ENCODE measurements at regions of chr1 and their contacts with region 1.

Region 1: DNA sequence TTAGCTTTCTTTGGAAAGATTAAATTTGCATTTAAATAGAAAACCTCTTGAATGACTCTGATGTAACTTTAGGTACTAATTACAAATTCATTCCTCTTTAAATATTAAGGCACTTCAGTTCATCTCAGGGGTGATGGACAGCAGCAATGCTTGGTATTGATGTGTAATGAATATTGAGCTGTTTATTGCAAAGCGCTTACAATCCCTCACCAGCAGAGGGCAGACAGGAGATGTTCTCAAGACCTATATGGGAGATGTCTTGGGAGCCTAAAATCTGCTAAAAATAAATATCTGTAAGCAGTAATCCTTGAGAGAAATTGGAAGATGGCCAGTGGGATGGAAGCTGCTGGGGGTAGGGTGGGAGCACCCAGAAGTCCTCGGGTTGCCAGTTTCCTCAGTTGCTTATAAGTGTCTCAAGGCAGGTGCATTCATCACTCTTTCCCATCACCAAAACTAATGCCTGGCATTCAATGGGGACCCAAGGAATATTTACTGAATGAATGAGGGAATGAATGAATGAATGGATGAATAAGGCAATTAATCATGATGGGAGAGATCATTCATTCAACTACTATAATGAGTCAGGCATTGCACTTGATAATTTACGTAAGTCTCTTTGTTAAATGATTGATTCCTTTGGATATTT is 2.3 kb downstream of the KLHDC8A start:
- DNase-seq: no peak

Region 2: DNA sequence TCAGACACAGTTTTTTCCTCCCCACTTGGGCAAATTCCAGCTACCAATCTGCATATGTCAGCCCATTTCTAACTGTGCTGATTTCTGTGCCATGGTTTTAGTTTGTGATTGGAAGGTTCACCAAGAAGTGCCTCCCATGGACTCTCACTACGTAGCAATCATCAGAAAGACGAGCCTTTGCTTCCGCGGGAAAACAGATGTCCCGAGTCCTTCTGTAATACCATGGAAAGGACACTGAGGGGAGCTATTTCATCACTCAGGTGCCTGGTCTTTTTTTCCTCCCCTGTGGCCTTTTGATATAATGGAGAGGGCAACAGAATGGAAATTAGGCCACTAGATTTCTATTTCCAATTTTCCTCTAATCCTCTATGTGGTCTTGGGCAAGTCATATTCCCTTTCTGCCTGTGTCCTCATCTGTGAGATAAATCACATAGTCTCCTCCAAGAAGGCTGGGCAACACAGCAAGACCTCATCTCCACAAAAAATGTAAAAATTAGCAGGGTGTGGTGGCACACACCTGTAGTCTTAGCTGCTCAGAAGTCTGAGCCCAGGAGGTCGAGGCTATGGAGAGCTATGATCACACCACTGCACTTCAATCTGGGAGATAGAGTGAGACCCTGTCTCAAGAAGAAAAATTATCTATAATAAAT is 42.7 kb after region 1 on chr1:
- intact Hi-C with region 1: no loop called
- DNase-seq: no peak

Region 3: GRCh38 chr1:205430696-205431305 is 76.4 kb after region 1 on chr1:
- intact Hi-C with region 1: loop called in 1 of 2 experiments (anchors 10 kb)
- DNase-seq: no peak

Region 4: GRCh38 chr1:205485338-205486228 is 131.2 kb after region 1 on chr1:
- intact Hi-C with region 1: loop called (anchors 1 to 10 kb)
- DNase-seq: peak; percentile 86

Region 5: DNA sequence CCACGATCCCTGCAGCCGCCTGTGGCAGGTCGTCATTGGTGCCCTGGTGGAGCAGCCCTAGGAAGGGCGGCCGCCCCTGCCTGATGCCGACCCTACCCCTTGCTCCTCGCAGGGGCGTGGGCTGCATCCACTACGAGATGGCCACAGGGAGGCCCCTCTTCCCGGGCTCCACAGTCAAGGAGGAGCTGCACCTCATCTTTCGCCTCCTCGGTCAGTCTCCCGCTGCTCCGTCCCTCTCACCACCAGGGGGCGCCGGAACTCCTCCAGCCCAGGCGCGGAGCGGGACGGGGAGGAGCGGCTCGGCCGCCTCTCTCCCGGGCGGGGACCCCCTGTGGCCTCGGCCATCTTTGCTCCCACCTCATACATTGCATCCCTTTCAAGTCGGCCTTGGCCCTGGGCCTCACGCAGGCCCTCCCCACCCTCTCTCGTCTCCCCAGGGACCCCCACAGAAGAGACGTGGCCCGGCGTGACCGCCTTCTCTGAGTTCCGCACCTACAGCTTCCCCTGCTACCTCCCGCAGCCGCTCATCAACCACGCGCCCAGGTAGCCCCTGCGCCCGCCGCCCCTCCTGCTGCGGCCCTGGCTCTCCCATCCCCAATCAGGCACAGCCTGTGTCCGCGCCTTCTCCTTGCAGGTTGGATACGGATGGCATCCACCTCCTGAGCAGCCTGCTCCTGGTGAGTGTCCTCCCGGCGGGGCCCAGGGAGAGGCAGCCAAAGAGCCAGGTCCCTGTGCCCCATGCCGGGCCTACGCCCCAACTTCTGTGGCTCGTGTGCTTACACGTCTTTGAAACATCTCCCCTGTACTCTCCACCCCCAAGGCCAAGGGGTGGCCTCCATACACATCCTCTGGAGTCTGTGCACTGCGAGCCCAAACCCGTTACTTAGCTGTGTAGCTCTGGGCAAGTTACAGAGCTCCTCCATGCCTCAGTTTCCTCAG is 174.8 kb after region 1 on chr1:
- intact Hi-C with region 1: loop called (anchors 1 to 10 kb)
- DNase-seq: peak; percentile 94